HEK293 (cell line): ENCODE measurements at regions of chr7 and their contacts with region 1.

Region 1: DNA sequence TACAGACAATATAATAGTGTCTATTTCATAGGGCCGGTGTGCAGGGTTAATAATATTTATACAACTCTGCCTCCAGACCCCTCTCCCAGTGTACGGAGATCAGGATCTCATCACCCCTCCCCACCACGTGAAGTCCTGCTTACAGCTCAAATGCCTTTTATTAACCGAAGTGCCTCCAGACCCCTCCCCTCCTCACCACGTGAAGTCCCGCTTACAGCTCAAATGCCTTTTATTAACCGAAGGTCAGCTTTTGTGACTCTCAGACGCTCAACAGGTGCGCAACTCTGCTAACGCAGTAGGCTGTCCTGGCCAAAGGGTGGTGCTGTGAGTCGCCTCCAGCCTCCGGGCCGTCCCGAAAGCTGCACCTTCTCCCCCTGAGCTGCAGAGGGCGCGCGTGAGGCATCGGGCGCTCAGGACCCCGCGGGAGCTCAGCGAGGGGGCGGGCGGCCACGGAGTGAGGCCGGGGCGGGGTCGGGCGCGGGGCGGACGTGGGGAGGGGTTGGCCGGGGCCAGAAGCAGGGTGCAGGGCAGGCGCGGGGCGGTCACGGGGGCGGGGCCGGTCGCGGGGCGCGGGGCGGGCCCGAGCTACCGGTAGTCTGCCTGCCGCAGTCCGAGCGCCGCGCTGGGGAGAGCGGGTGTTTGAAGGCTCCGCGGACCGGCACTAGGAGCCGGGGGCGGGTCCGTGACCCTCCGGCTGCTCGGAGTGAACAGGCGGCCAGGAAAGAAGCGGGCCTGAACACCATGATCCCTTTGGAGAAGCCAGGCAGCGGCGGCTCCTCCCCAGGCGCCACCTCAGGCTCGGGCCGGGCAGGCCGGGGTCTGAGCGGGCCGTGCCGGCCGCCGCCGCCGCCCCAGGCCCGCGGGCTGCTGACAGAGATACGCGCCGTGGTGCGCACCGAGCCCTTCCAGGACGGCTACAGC is at the start of gene STK17A:
- H3K4me3 ChIP-seq: peak within 1 kb of the TSS; percentile 82
- H3K27ac ChIP-seq: peak within 1 kb of the TSS; percentile 87
- H3K4me1 ChIP-seq: peaks cover 21% of the 10 kb centered on the region
- CTCF ChIP-seq: peak; percentile 98

Region 2: DNA sequence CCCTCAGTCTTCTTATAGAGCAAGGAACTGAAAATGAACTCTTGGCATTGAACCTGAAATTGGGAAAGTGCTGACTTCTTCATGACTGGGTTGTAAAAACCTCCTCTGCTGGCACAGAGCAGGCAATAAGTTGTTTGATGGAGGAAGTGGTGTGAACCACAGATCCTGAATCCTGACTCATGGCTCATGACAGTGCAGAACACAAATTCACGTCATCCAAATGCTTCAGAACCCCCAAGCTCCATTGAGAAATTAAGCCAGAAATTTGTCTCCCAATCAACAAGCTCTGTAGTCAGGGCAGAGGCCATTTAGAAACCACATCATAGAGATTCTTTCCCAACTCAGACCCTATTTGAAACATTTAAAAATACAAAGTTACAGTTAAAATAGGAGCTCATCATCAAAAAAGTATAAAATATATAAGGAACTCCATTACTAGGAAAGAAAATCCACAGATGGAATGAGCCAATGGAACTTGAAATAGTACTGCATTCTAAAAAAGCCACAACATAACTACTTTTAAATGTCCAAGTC is 10.2 kb before region 1 on chr7:
- CTCF ChIA-PET with region 1: interaction called, 33 read pairs
- POLR2A ChIA-PET with region 1: interaction called, 19 read pairs
- H3K4me3 ChIP-seq: no peak overlapping the region
- H3K27ac ChIP-seq: no peak overlapping the region
- H3K4me1 ChIP-seq: no peaks in the 10 kb centered on the region
- CTCF ChIP-seq: no peak

Region 3: DNA sequence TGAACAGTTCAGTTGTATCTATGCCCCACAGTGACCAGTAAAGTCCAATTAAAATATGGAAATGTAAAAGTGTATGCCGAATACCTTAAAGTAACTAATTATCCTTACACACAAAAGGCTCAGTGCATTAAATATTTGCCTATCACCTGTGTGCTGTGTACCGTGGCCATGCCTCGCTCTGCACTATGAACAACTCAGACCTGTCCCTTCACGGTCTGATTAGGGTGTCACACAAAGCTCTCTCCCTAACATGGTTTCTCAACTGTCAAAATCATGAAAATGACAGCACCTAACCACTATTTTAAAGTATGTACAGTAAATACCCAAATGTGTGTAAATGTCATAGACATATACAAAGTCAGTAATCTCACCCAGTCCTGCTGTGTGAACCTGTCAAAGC is 43.2 kb after region 1 on chr7:
- CTCF ChIA-PET with region 1: interaction called, 27 read pairs
- POLR2A ChIA-PET with region 1: interaction called, 14 read pairs
- H3K4me3 ChIP-seq: no peak overlapping the region
- H3K27ac ChIP-seq: no peak overlapping the region
- H3K4me1 ChIP-seq: no peaks in the 10 kb centered on the region
- CTCF ChIP-seq: no peak

Region 4: GRCh38 chr7:43693687-43694398 is 111.1 kb after region 1 on chr7:
- CTCF ChIA-PET with region 1: interaction called, 143 read pairs
- POLR2A ChIA-PET with region 1: interaction called, 62 read pairs
- H3K4me3 ChIP-seq: no peak overlapping the region
- H3K27ac ChIP-seq: no peak overlapping the region
- H3K4me1 ChIP-seq: no peaks in the 10 kb centered on the region
- CTCF ChIP-seq: no peak

Region 5: GRCh38 chr7:43729214-43729923 is 146.6 kb after region 1 on chr7 and contains the start of gene COA1:
- CTCF ChIA-PET with region 1: interaction called, 15 read pairs
- POLR2A ChIA-PET with region 1: interaction called, 21 read pairs
- H3K4me3 ChIP-seq: peak within 1 kb of the TSS; percentile 82
- H3K27ac ChIP-seq: peak within 1 kb of the TSS; percentile 83
- H3K4me1 ChIP-seq: no peaks in the 10 kb centered on the region; the same call in 1 of the 2 replicates
- CTCF ChIP-seq: no peak